ENCODE measurements at regions of chr4 and their contacts with region 1.

Region 1: GRCh38 chr4:119286377-119287002 is 35.4 kb downstream of the FABP2 start:
- DNase-seq: no peak
- ATAC-seq: no peak
- H3K4me3 ChIP-seq: no peak overlapping the region
- H3K27ac ChIP-seq: no peak overlapping the region
- H3K4me1 ChIP-seq: no peaks in the 10 kb centered on the region
- H3K27me3 ChIP-seq: no peaks in the 10 kb centered on the region
- CTCF ChIP-seq: peak; percentile 48 to 63 (median 49); a peak in 5 of 6 replicates
- EP300 ChIP-seq: no peak
- POLR2A ChIP-seq: no peak
- RAD21 ChIP-seq: peak; percentile 86

Region 2: DNA sequence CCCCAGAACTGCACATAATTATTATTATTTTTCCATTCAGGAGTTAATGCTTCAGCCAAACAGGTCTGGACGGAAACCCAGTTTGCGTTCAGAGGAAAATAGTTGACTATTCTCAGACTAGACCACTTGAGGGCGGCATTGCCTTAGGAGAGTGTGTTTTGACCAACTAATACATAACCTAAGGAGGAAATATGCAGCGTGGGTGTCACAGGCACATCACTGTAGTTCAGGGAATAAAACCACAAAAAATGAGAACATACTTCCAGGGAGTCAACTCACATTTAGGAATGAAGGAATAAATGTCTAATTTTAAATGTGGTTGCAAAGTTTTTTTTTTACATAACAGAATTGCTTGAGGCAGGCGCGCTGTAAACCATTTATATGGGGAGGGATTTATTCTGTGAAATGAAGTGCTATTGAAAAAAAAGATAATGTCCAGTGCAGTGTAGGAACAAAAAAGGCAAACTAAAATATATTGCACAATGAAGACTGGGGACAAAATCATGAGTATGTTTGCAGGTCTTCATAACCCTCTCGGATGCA is 304.6 kb before region 1 on chr4:
- CTCF ChIA-PET with region 1: interaction called, 5 read pairs
- POLR2A ChIA-PET with region 1: no interaction called
- RAD21 ChIA-PET with region 1: no interaction called
- SMC1A ChIA-PET with region 1: interaction called, 3 read pairs
- in situ Hi-C with region 1: loop called (anchors 5 kb)
- intact Hi-C with region 1: loop called (anchors 1 kb)
- DNase-seq: no peak
- ATAC-seq: peak; percentile 94
- H3K4me3 ChIP-seq: no peak overlapping the region
- H3K27ac ChIP-seq: no peak overlapping the region
- H3K4me1 ChIP-seq: no peaks in the 10 kb centered on the region
- H3K27me3 ChIP-seq: no peaks in the 10 kb centered on the region
- CTCF ChIP-seq: peak; percentile 70 to 80 (median 79)
- EP300 ChIP-seq: no peak
- POLR2A ChIP-seq: no peak
- RAD21 ChIP-seq: peak; percentile 98

Region 3: GRCh38 chr4:119041951-119042560 is 244.4 kb before region 1 on chr4:
- CTCF ChIA-PET with region 1: interaction called, 11 read pairs
- POLR2A ChIA-PET with region 1: no interaction called
- RAD21 ChIA-PET with region 1: interaction called, 4 read pairs
- SMC1A ChIA-PET with region 1: interaction called, 3 read pairs
- in situ Hi-C with region 1: no loop called
- intact Hi-C with region 1: loop called (anchors 1 kb)
- DNase-seq: peak; percentile 12
- ATAC-seq: peak; percentile 95
- H3K4me3 ChIP-seq: no peak overlapping the region
- H3K27ac ChIP-seq: no peak overlapping the region
- H3K4me1 ChIP-seq: peaks cover 6% of the 10 kb centered on the region; the same call in 1 of the 2 replicates
- H3K27me3 ChIP-seq: peaks cover 0 to 2% of the 10 kb centered on the region in 2 experiments; a peak in 1 of 4 replicates
- CTCF ChIP-seq: peak; percentile 57 to 62 (median 58)
- EP300 ChIP-seq: no peak
- POLR2A ChIP-seq: no peak
- RAD21 ChIP-seq: peak; percentile 78

Region 4: DNA sequence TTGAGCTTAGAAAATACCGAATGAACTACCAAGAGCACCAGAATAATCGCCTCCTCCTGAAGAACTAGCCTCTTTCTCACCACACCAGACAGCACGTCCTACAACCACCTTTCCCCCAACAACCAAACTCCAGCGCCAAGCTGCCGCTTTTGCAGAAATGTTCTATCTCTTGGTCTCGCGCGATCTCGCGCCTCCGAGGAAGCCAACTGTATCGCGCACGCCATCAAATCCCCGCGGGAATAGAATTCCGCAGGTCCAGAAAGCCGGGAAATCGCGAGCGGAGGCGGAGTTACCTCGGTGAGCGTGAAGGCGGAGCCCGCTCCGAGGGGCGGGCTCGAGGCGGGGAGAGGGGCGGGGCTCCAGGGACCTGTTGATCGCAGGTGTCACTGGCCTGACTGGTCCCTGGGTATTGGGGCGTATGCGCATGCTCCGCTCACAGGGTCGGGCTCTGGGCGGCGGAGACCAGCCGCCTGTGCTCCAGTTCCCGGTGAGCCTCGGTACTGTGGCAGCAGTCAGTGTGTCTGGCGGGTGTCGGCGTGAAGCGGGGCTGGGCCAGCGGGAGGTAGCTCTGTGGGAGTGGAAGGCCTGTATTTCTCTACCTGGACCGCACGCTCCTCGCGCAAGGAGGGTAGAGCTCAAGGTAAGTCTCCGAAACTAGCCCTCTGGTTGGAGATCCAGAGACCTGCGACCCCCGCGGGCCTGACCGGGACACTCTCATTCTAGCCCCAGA is 74.1 kb before region 1 on chr4 and contains the start of gene USP53:
- CTCF ChIA-PET with region 1: no interaction called
- POLR2A ChIA-PET with region 1: no interaction called
- RAD21 ChIA-PET with region 1: no interaction called
- SMC1A ChIA-PET with region 1: no interaction called
- in situ Hi-C with region 1: no loop called
- intact Hi-C with region 1: loop called (anchors 5 kb)
- DNase-seq: peak; percentile 71
- ATAC-seq: peak; percentile 96
- H3K4me3 ChIP-seq: peak within 1 kb of the TSS; percentile 76
- H3K27ac ChIP-seq: peak within 1 kb of the TSS; percentile 6; the same call in 1 of the 2 replicates
- H3K4me1 ChIP-seq: no peaks in the 10 kb centered on the region; the same call in 1 of the 2 replicates
- H3K27me3 ChIP-seq: peaks cover 0 to 2% of the 10 kb centered on the region in 2 experiments; a peak in 1 of 4 replicates
- CTCF ChIP-seq: no peak
- EP300 ChIP-seq: no peak
- POLR2A ChIP-seq: peak; percentile 92
- RAD21 ChIP-seq: no peak
- polyA plus RNA-seq, gene USP53: 0.63 to 1.1 TPM

Region 5: GRCh38 chr4:119227690-119228089 is 58.8 kb before region 1 on chr4:
- CTCF ChIA-PET with region 1: no interaction called
- POLR2A ChIA-PET with region 1: no interaction called
- RAD21 ChIA-PET with region 1: no interaction called
- SMC1A ChIA-PET with region 1: no interaction called
- in situ Hi-C with region 1: no loop called
- intact Hi-C with region 1: no loop called
- DNase-seq: no peak
- ATAC-seq: no peak
- H3K4me3 ChIP-seq: no peak overlapping the region
- H3K27ac ChIP-seq: no peak overlapping the region
- H3K4me1 ChIP-seq: no peaks in the 10 kb centered on the region
- H3K27me3 ChIP-seq: no peaks in the 10 kb centered on the region
- CTCF ChIP-seq: no peak
- EP300 ChIP-seq: no peak
- POLR2A ChIP-seq: no peak
- RAD21 ChIP-seq: no peak

Measured in GM12878 (cell line).